ENCODE measurements at regions of chr2 and their contacts with region 1.

Region 1: GRCh38 chr2:74010087-74010661 is 25.5 kb downstream of the TET3 start:
- DNase-seq: no peak
- ATAC-seq: no peak
- H3K4me3 Mint-ChIP-seq: no peak overlapping the region
- H3K27ac Mint-ChIP-seq: peak overlapping the region in 4 of 10 donors; percentile 29 to 48 (median 43)
- H3K4me1 Mint-ChIP-seq: peaks cover 17 to 57% (median 53%) of the 10 kb centered on the region in 4 donors
- H3K27me3 Mint-ChIP-seq: no peaks in the 10 kb centered on the region

Region 2: GRCh38 chr2:74507145-74507925 is 497.2 kb after region 1 on chr2 and contains the start of gene PCGF1:
- POLR2A ChIA-PET with region 1: interaction called, 10 read pairs
- DNase-seq: peak; percentile 92 to 100 (median 98)
- ATAC-seq: peak; percentile 88 to 95
- H3K4me3 Mint-ChIP-seq: peak within 1 kb of the TSS; percentile 95 to 100 (median 99)
- H3K27ac Mint-ChIP-seq: peak within 1 kb of the TSS; percentile 98 to 100 (median 100)
- H3K4me1 Mint-ChIP-seq: peaks cover 16 to 58% (median 54%) of the 10 kb centered on the region in 4 donors
- H3K27me3 Mint-ChIP-seq: peaks cover 14 to 64% (median 39%) of the 10 kb centered on the region in 5 donors
- polyA plus RNA-seq, gene PCGF1: 6.7 to 11.8 (median 7.3) TPM